A549 (cell line): ENCODE measurements at regions of chr2 and their contacts with region 1.

Region 1: GRCh38 chr2:75560768-75561565 is at the start of gene EVA1A:
- DNase-seq: peak; percentile 16 to 33
- ATAC-seq: peak; percentile 69 to 76
- H3K4me3 ChIP-seq: peak within 1 kb of the TSS; percentile 70
- H3K27ac ChIP-seq: peak within 1 kb of the TSS; percentile 72 to 88
- H3K4me1 ChIP-seq: peaks cover 21% of the 10 kb centered on the region; the same call in 1 of the 3 replicates
- CTCF ChIP-seq: no peak; the same call in 2 of the 3 replicates
- EP300 ChIP-seq: no peak
- POLR2A ChIP-seq: no peak
- RAD21 ChIP-seq: no peak
- polyA plus RNA-seq, gene EVA1A: 2.5 TPM in 2 replicates

Region 2: GRCh38 chr2:75246441-75247167 is 314.4 kb before region 1 on chr2:
- CTCF ChIA-PET with region 1: no interaction called
- POLR2A ChIA-PET with region 1: no interaction called
- DNase-seq: no peak
- ATAC-seq: no peak
- H3K4me3 ChIP-seq: no peak overlapping the region
- H3K27ac ChIP-seq: no peak overlapping the region
- H3K4me1 ChIP-seq: 0 out of 3 replicates have a peak, but pooled peaks cover 3% of the 10 kb centered on the region
- CTCF ChIP-seq: no peak
- EP300 ChIP-seq: no peak
- POLR2A ChIP-seq: no peak
- RAD21 ChIP-seq: no peak

Region 3: DNA sequence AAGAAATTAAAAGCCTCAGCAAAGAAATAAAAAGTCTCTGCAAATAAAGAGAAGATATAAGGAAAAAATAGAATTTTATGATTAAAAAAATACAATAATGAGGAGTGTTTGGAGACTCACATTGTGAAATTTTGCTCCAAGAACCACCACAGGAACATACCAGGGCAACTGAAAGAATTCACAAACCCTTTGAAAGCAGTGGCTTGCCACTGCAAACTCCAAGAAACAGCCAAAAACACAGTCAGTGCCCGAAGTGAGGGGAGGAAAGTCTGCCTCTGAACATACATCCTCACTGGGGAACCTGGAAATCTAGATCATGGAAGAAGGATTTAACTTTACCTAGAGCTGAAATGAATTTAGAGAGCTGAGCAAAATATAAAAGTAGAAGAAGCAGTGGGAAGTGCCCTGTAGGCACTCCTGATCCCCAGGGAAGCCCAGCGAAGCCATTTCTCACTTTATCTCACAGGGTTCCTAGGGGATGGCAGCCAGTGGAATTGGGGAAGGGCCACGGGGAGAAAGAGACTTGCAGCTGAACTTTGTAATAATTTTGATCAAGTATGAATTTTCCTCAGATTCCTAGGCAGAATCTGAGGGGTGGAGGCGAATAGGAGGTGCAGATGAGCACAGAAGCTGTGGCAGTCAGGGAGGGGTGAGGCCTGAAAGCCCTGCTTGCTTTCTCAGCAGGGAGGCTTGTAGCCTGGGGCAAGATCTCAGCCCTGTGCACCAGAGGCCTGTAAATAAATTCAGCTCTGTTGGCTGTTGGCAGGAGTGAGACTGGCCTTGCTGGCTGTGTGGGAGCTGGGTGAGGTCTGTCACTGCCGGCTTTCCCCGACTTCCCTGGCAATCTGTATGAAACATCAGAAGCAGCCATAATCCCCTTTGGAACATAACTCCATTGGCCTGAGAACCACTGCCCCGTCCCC is 33.0 kb before region 1 on chr2:
- CTCF ChIA-PET with region 1: no interaction called
- POLR2A ChIA-PET with region 1: no interaction called
- DNase-seq: peak in 1 of 2 experiments; percentile 14
- ATAC-seq: peak in 1 of 2 experiments; percentile 42; a peak in 2 of 6 replicates
- H3K4me3 ChIP-seq: no peak overlapping the region
- H3K27ac ChIP-seq: peak overlapping the region; percentile 34 to 71; a peak in 5 of 6 replicates
- H3K4me1 ChIP-seq: peaks cover 60% of the 10 kb centered on the region
- CTCF ChIP-seq: no peak
- EP300 ChIP-seq: no peak
- POLR2A ChIP-seq: no peak
- RAD21 ChIP-seq: no peak

Region 4: GRCh38 chr2:75549401-75550253 is 11.3 kb before region 1 on chr2:
- CTCF ChIA-PET with region 1: interaction called, 17 read pairs
- POLR2A ChIA-PET with region 1: interaction called, 3 read pairs
- DNase-seq: no peak
- ATAC-seq: no peak
- H3K4me3 ChIP-seq: no peak overlapping the region
- H3K27ac ChIP-seq: 0 out of 6 replicates have a peak overlapping the region, but pooled peaks of 1 of the 2 experiments have one; percentile 12
- H3K4me1 ChIP-seq: peaks cover 21% of the 10 kb centered on the region
- CTCF ChIP-seq: no peak
- EP300 ChIP-seq: no peak
- POLR2A ChIP-seq: no peak
- RAD21 ChIP-seq: no peak

Region 5: GRCh38 chr2:75570948-75571729 is 10.2 kb after region 1 on chr2:
- CTCF ChIA-PET with region 1: interaction called, 19 read pairs
- POLR2A ChIA-PET with region 1: no interaction called
- DNase-seq: no peak
- ATAC-seq: no peak
- H3K4me3 ChIP-seq: no peak overlapping the region
- H3K27ac ChIP-seq: peak overlapping the region in 1 of 2 experiments; percentile 30; a peak in 1 of 6 replicates
- H3K4me1 ChIP-seq: peaks cover 12% of the 10 kb centered on the region; the same call in 2 of the 3 replicates
- CTCF ChIP-seq: no peak
- EP300 ChIP-seq: no peak
- POLR2A ChIP-seq: no peak
- RAD21 ChIP-seq: no peak